Transverse colon (tissue), 4 donors: ENCODE measurements at regions of chr1 and their contacts with region 1.

Region 1: GRCh38 chr1:174883409-174883808 is 116.3 kb upstream of the CACYBP start:
- DNase-seq: no peak
- H3K4me3 ChIP-seq: no peak overlapping the region
- H3K27ac ChIP-seq: no peak overlapping the region
- H3K4me1 ChIP-seq: peaks cover 0 to 12% (median under 1%) of the 10 kb centered on the region in 4 donors
- H3K27me3 ChIP-seq: no peaks in the 10 kb centered on the region
- CTCF ChIP-seq: no peak
- EP300 ChIP-seq: no peak
- POLR2A ChIP-seq: no peak

Region 2: GRCh38 chr1:174982971-174983689 is 99.7 kb after region 1 on chr1:
- in situ Hi-C with region 1: loop called in 1 of 4 experiments (anchors 10 kb)
- intact Hi-C with region 1: no loop called
- DNase-seq: no peak
- H3K4me3 ChIP-seq: no peak overlapping the region
- H3K27ac ChIP-seq: no peak overlapping the region
- H3K4me1 ChIP-seq: no peaks in the 10 kb centered on the region
- H3K27me3 ChIP-seq: no peaks in the 10 kb centered on the region
- CTCF ChIP-seq: peak; percentile 62 to 70 (median 64)
- EP300 ChIP-seq: no peak
- POLR2A ChIP-seq: no peak